K562 (cell line): ENCODE measurements at regions of chr19 and their contacts with region 1.

Region 1: GRCh38 chr19:21141787-21142464 is at the start of gene ZNF431:
- DNase-seq: peak; percentile 86 to 97 (median 88)
- ATAC-seq: peak; percentile 96
- H3K4me3 ChIP-seq: peak within 1 kb of the TSS; percentile 88
- H3K27ac ChIP-seq: peak within 1 kb of the TSS; percentile 88
- H3K4me1 ChIP-seq: peaks cover 0 to 16% of the 10 kb centered on the region in 2 experiments; a peak in 3 of 5 replicates
- H3K27me3 ChIP-seq: no peaks in the 10 kb centered on the region
- CTCF ChIP-seq: no peak
- EP300 ChIP-seq: no peak
- POLR2A ChIP-seq: peak; percentile 92
- RAD21 ChIP-seq: no peak
- polyA plus RNA-seq, gene ZNF431: 3.3 to 5.0 TPM

Region 2: DNA sequence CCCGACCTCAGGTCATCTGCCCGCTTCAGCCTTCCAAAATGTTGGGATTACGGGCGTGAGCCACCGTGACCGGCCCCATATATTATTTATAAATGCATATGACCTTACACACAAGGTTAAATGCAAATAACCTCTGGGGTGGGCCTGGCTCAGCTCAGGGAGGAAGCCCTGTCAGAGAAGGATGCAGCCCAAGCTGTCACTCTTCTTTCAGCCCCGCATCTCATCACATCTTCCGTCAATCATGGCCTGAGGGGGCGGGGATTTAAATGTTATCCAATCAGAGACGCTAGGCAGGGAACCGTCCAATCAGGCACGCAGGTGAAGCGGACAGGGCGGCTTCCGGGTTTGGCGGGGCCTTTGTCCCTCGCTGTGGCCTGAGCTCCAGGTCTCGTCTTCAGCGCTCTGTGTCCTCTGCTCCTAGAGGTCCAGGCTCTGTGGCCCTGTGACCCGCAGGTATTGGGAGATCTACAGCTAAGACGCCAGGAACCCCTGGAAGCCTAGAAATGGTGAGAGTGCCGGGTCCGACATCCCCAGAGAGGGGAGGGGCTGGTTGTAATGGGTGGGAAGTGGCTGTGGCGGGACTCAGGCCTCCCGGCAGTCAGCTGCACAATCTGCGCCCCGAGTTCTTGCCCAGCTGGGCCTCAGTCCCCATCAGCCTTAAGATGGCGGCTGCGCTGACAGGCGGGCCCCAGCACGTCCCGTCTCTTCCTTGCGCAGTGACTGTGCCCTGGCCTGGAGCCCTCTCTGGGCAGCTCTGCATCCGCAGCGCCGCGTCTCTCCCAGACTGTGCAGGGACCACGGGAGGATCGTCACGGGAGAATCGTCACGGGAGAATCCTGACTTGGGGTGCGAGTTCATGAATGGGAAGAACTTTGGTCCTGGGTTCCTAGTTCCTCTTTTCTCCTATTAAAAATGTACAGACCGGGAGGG is 121.4 kb before region 1 on chr19 and contains the start of gene ZNF430:
- CTCF ChIA-PET with region 1: no interaction called
- POLR2A ChIA-PET with region 1: interaction called, 5 read pairs
- in situ Hi-C with region 1: no loop called
- intact Hi-C with region 1: loop called (anchors 5 kb)
- DNase-seq: peak; percentile 87 to 97 (median 92)
- ATAC-seq: peak; percentile 98
- H3K4me3 ChIP-seq: peak within 1 kb of the TSS; percentile 88
- H3K27ac ChIP-seq: peak within 1 kb of the TSS; percentile 88
- H3K4me1 ChIP-seq: peaks cover 2 to 13% of the 10 kb centered on the region in 2 experiments; a peak in 4 of 5 replicates
- H3K27me3 ChIP-seq: no peaks in the 10 kb centered on the region
- CTCF ChIP-seq: no peak
- EP300 ChIP-seq: no peak
- POLR2A ChIP-seq: peak; percentile 90
- RAD21 ChIP-seq: no peak
- polyA plus RNA-seq, gene ZNF430: 4.7 to 5.3 TPM

Region 3: DNA sequence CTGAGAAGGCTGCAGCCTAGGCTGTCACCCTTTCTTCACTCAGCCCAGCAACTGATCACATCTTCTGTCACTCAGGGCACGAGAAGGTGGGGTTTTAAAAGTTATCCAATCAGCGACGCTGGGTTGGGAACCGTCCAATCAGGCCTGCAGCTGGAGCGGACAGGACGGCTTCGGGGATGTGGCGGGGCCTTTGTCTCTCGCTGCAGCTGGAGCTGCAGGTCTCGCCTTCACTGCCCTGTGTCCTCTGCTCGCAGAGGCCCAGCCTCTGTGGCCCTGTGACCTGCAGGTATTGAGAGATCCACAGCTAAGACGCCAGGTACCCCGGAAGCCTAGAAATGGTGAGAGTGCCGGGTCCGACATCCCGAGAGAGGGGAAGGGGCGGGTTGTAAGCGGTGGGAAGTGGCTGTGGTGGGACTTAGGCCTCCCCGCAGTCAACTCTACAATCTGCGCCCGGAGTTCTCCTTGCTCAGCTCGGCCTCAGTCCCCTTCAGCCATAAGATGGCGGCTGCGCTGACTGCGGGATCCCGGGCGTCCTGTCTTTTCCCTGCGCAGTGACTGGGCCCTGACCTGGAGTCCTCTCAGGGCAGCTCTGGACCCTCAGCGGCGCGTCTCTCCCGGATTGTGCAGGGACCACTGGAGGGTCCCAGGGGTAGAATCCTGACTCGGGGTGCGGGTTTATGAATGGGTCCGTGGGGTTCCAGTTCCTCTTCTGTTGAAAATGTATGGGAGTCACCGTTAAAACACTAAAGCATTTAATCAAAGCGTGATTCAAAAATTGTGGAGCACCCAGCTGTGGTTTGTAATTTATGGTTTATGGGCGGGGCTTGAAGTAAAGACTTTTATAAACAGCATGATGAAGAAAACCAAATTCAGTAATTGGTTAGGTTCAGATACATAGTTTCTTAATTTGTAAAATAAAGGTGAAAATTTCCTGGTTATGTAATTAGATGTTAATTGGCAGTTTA is 59.6 kb before region 1 on chr19 and contains the start of gene ZNF714:
- CTCF ChIA-PET with region 1: no interaction called
- POLR2A ChIA-PET with region 1: interaction called, 11 read pairs
- in situ Hi-C with region 1: no loop called
- intact Hi-C with region 1: loop called (anchors 5 kb)
- DNase-seq: peak; percentile 92 to 97 (median 94)
- ATAC-seq: peak; percentile 99
- H3K4me3 ChIP-seq: peak within 1 kb of the TSS; percentile 90
- H3K27ac ChIP-seq: peak within 1 kb of the TSS; percentile 88
- H3K4me1 ChIP-seq: peaks cover 4 to 6% of the 10 kb centered on the region in 2 experiments
- H3K27me3 ChIP-seq: no peaks in the 10 kb centered on the region
- CTCF ChIP-seq: no peak
- EP300 ChIP-seq: no peak
- POLR2A ChIP-seq: peak; percentile 92
- RAD21 ChIP-seq: no peak
- polyA plus RNA-seq, gene ZNF714: 25.2 to 29.1 TPM

Region 4: GRCh38 chr19:21127001-21127400 is 14.9 kb before region 1 on chr19:
- CTCF ChIA-PET with region 1: no interaction called
- POLR2A ChIA-PET with region 1: interaction called, 10 read pairs
- in situ Hi-C with region 1: no loop called
- intact Hi-C with region 1: no loop called
- DNase-seq: peak in 1 of 4 experiments; percentile 60
- ATAC-seq: no peak
- H3K4me3 ChIP-seq: no peak overlapping the region
- H3K27ac ChIP-seq: peak overlapping the region; percentile 15; the same call in 2 of the 3 replicates
- H3K4me1 ChIP-seq: peaks cover 0 to 17% of the 10 kb centered on the region in 2 experiments; a peak in 2 of 5 replicates
- H3K27me3 ChIP-seq: no peaks in the 10 kb centered on the region
- CTCF ChIP-seq: no peak
- EP300 ChIP-seq: peak; percentile 63
- POLR2A ChIP-seq: no peak
- RAD21 ChIP-seq: no peak